MCF 10A (cell line): ENCODE measurements at regions of chr10 and their contacts with region 1.

Region 1: GRCh38 chr10:69360485-69361324 is 56.0 kb downstream of the TACR2 start:
- DNase-seq: peak; percentile 96
- H3K4me3 Mint-ChIP-seq: peak overlapping the region; percentile 49
- H3K27ac Mint-ChIP-seq: peak overlapping the region; percentile 87
- H3K4me1 Mint-ChIP-seq: peaks cover 52% of the 10 kb centered on the region
- H3K27me3 Mint-ChIP-seq: no peaks in the 10 kb centered on the region
- CTCF ChIP-seq: no peak

Region 2: GRCh38 chr10:69307434-69307833 is 53.3 kb before region 1 on chr10:
- CTCF ChIA-PET with region 1: no interaction called
- POLR2A ChIA-PET with region 1: no interaction called
- intact Hi-C with region 1: no loop called
- DNase-seq: no peak
- H3K4me3 Mint-ChIP-seq: no peak overlapping the region
- H3K27ac Mint-ChIP-seq: no peak overlapping the region
- H3K4me1 Mint-ChIP-seq: peaks cover 6% of the 10 kb centered on the region
- H3K27me3 Mint-ChIP-seq: no peaks in the 10 kb centered on the region
- CTCF ChIP-seq: no peak

Region 3: GRCh38 chr10:69327463-69328379 is 33.0 kb before region 1 on chr10:
- CTCF ChIA-PET with region 1: interaction called, 9 read pairs
- POLR2A ChIA-PET with region 1: interaction called, 57 read pairs
- intact Hi-C with region 1: no loop called
- DNase-seq: peak; percentile 79
- H3K4me3 Mint-ChIP-seq: peak overlapping the region; percentile 69
- H3K27ac Mint-ChIP-seq: peak overlapping the region; percentile 88
- H3K4me1 Mint-ChIP-seq: peaks cover 47% of the 10 kb centered on the region
- H3K27me3 Mint-ChIP-seq: no peaks in the 10 kb centered on the region
- CTCF ChIP-seq: no peak

Region 4: DNA sequence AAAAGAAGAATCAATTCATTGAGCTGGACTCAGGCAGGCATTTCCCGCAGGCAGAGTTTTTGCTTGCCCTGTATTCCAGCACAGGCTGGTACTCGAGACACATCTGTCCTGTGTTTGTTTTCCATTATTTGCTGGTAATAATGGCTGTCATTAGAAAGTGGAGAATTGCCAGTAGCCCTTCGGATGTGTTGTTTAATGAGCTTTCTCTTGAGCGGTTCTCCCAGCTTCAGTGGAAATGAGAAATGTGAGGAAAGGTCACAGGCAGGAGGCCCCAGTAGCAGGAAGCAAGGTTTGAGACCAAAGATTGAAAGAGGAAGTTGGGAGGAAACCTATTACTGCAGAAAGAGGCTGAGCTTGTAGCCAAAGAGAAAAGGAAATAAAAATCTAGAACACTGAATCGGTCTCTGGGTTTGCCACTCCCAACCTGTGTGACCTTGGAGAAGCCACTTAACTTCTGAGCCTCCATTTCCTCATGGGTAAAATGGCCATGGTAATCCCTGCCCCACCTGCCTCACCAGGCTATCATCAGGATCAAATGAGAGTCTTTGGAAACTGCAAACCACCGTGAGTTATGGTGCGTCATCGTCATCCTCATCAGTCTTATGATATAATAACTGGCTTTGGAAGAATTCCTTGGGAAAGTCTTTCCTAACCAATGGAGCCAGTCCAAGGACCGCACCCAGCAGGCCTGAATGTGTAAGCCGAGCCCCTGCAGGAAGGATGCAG is 11.7 kb before region 1 on chr10:
- CTCF ChIA-PET with region 1: interaction called, 10 read pairs
- POLR2A ChIA-PET with region 1: interaction called, 46 read pairs
- intact Hi-C with region 1: no loop called
- DNase-seq: peak; percentile 96
- H3K4me3 Mint-ChIP-seq: no peak overlapping the region
- H3K27ac Mint-ChIP-seq: peak overlapping the region; percentile 93
- H3K4me1 Mint-ChIP-seq: peaks cover 25% of the 10 kb centered on the region
- H3K27me3 Mint-ChIP-seq: no peaks in the 10 kb centered on the region
- CTCF ChIP-seq: no peak

Region 5: DNA sequence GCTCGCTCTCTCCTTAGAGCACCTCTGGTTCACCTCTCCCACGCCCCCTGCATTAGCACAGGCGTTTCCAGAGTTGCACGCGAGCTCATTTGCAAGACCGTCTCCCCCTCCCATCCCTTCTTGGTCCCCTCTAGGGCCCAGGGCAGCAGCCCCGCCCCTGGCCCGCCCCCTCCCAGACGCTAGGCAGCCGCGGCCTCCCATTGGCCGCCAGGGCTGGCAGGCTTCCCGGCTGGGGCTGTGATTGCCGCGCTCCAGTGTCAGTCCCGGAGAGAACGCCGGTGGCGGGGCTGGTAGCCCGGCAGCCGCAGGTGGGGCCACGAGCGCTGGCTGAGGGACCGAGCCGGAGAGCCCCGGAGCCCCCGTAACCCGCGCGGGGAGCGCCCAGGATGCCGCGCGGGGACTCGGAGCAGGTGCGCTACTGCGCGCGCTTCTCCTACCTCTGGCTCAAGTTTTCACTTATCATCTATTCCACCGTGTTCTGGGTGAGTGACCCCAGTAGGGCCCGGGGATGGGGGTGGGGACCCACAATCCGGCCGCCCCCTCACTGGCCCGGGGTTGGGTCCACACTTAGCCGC is 90.6 kb after region 1 on chr10 and contains the start of gene TSPAN15:
- CTCF ChIA-PET with region 1: no interaction called
- POLR2A ChIA-PET with region 1: no interaction called
- intact Hi-C with region 1: no loop called
- DNase-seq: peak; percentile 67
- H3K4me3 Mint-ChIP-seq: peak within 1 kb of the TSS; percentile 72
- H3K27ac Mint-ChIP-seq: no peak within 1 kb of the TSS
- H3K4me1 Mint-ChIP-seq: peaks cover 31% of the 10 kb centered on the region
- H3K27me3 Mint-ChIP-seq: no peaks in the 10 kb centered on the region
- CTCF ChIP-seq: no peak
- total RNA-seq, gene TSPAN15: 0.52 and 0.54 TPM in 2 replicates